Thyroid gland (tissue), 4 donors: ENCODE measurements at regions of chr6 and their contacts with region 1.

Region 1: GRCh38 chr6:143842902-143843676 is at the start of gene LTV1:
- DNase-seq: peak; percentile 96
- H3K4me3 ChIP-seq: peak within 1 kb of the TSS; percentile 56 to 90 (median 86)
- H3K27ac ChIP-seq: peak within 1 kb of the TSS; percentile 92 to 97 (median 95)
- H3K4me1 ChIP-seq: peaks cover 6 to 7% of the 10 kb centered on the region in 2 donors
- H3K27me3 ChIP-seq: no peaks in the 10 kb centered on the region
- CTCF ChIP-seq: no peak
- POLR2A ChIP-seq: peak; percentile 50 to 81
- total RNA-seq, gene LTV1: 10.8 to 15.7 (median 13.6) TPM

Region 2: GRCh38 chr6:143579703-143580102 is 263.4 kb before region 1 on chr6:
- intact Hi-C with region 1: loop called (anchors 10 kb)
- DNase-seq: no peak
- H3K4me3 ChIP-seq: no peak overlapping the region
- H3K27ac ChIP-seq: no peak overlapping the region
- H3K4me1 ChIP-seq: no peaks in the 10 kb centered on the region
- H3K27me3 ChIP-seq: no peaks in the 10 kb centered on the region
- CTCF ChIP-seq: no peak
- POLR2A ChIP-seq: no peak

Region 3: DNA sequence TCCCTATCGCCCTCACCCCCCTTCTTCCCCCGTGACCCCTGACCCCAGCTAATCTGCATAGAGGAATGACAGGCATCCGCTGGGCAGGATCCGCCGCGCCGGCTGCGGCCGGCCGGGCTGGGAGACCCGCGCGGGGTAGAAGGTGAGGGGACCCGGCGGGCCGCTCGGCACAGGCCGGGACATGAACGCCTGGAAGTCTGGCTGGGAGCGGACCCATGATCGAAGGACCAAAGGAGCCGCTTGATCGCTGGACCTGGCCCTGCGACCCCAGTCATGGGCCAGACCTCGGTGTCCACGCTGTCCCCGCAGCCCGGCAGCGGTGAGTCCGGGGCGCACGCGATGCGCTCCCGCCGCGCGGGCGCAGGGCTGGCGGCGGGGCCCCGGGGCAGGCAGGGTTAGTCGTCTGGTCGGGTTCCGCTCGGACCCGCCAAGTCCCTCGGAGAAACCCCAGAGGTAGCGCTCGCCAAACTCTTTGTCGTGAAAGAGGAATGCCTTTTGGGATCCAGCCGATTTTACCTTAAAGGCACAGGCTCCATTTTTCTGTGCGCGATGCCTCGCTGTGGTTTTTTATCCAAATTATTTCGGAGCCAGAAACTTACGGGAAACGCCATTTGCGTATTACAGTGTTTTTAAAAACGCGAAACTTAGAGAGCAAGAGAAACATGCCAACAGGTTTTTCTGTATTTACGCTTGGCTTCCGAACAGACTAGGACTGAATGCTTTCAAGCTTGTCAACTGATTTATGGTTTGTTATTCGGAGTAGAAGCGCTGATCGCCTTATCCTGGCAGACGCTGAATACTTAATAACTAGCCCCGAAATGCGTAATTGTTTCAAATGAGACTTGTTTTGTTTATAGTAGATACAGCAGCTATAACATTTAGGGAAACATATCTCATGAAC is 164.9 kb before region 1 on chr6 and contains the start of gene PHACTR2:
- intact Hi-C with region 1: loop called (anchors 10 kb)
- DNase-seq: peak; percentile 78 to 81
- H3K4me3 ChIP-seq: peak within 1 kb of the TSS; percentile 52 to 94 (median 82)
- H3K27ac ChIP-seq: peak within 1 kb of the TSS; percentile 96 to 98 (median 97)
- H3K4me1 ChIP-seq: peaks cover 29 to 30% of the 10 kb centered on the region in 2 donors
- H3K27me3 ChIP-seq: no peaks in the 10 kb centered on the region
- CTCF ChIP-seq: no peak
- POLR2A ChIP-seq: peak; percentile 72 to 86
- total RNA-seq, gene PHACTR2: 95.0 to 127 (median 111) TPM

Region 4: DNA sequence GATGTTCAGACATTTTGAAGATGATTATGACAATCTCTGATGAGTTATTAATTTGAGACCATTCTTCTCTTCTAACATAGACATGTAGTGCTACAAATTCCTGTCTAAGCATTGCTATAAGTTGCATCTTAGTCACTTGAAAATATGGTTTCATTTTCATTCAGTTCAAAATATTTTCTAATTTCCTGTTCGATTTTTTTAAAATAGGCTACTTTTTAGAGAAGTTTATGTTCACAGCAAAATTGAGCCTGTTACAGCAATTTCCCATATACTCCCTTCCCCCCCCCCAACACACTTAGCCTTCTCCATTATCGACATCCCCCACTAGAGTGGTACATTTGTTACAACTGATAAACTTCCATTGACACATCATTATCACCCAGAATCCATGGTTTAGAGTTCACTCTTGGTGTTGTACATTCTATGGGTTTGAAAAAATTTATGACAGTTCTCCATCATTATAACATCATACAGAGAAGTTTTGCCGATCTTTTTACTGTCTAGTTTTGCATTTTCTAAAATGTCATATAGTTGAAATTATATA is 133.8 kb after region 1 on chr6:
- intact Hi-C with region 1: no loop called
- DNase-seq: no peak
- H3K4me3 ChIP-seq: no peak overlapping the region
- H3K27ac ChIP-seq: no peak overlapping the region
- H3K4me1 ChIP-seq: no peaks in the 10 kb centered on the region
- H3K27me3 ChIP-seq: no peaks in the 10 kb centered on the region
- CTCF ChIP-seq: no peak
- POLR2A ChIP-seq: no peak

Region 5: DNA sequence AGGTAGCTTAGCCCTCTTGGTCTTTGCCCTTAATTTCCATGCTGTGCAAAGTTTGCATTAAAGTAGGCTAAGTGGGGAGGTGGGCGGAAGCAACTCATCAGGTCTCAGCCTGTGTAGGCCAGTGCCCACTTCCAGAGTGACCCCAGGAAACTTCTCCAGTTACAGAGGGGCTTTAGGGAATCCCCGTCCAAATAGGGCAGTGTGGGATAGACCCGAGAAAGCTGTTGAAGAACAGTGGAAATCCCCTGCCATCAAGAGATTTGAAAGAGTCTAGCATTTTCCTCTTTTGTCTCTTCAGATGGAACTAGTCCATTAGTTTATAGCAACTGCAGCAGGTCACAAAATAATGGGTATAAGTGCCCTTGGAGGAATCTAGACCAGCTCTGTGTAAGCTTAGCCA is 232.1 kb after region 1 on chr6:
- intact Hi-C with region 1: no loop called
- DNase-seq: no peak
- H3K4me3 ChIP-seq: no peak overlapping the region
- H3K27ac ChIP-seq: no peak overlapping the region
- H3K4me1 ChIP-seq: no peaks in the 10 kb centered on the region
- H3K27me3 ChIP-seq: no peaks in the 10 kb centered on the region
- CTCF ChIP-seq: no peak
- POLR2A ChIP-seq: no peak